ENCODE measurements at regions of chr12 and their contacts with region 1.

Region 1: DNA sequence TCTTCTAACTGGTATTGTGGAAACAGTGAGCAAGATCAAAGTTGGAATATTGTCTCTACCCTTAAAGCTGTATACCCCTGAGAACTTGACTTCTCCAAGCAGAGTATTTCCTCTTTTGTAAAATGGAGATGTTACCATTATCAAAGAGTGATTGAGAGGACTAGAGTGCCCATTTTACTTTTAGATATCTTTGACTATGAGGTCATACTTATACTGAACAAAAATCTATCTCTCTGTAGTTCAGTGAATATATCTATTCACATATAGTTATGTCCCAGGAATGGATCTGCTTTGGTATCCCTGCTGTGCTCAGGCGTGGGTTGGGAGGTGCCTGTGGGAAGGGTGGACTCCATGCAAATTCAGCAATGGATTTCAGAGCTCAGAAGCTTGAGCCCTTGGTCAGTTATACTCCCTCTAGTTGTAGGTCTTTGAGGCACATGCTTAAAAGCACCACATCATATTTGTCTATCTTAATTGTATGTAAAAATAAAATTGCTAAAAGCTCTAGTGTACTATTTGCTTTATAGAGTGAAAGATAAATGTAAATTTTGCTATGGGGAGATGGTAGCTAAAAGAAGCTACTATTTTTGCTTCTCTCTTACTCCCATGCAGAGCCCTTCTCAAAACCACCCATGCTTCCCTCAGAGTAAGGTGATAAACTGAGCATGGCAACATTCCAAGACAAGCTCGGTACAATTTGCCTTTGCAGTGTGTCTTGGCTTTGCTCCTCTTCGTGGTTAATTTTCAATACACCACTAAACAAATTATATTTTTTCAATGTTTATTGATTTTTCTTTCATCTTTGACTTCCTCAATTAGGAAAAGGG is 54.8 kb downstream of the SLC16A7 start:
- DNase-seq: no peak
- ATAC-seq: no peak
- H3K4me3 ChIP-seq: no peak overlapping the region
- H3K4me3 Mint-ChIP-seq: peak overlapping the region in 3 of 10 donors; percentile 1 to 43 (median 24)
- H3K27ac ChIP-seq: no peak overlapping the region
- H3K27ac Mint-ChIP-seq: peak overlapping the region in 2 of 9 donors; percentile 3 to 9
- H3K4me1 ChIP-seq: peaks cover 5 to 8% of the 10 kb centered on the region in 2 donors
- H3K4me1 Mint-ChIP-seq: peaks cover 9 to 65% (median 49%) of the 10 kb centered on the region in 7 donors
- H3K27me3 ChIP-seq: no peaks in the 10 kb centered on the region
- H3K27me3 Mint-ChIP-seq: no peaks in the 10 kb centered on the region

Region 2: GRCh38 chr12:57679697-57680096 is 1970.9 kb before region 1 on chr12:
- CTCF ChIA-PET with region 1: no interaction called
- POLR2A ChIA-PET with region 1: no interaction called
- intact Hi-C with region 1: no loop called
- DNase-seq: no peak
- ATAC-seq: no peak
- H3K4me3 ChIP-seq: no peak overlapping the region
- H3K4me3 Mint-ChIP-seq: no peak overlapping the region
- H3K27ac ChIP-seq: no peak overlapping the region
- H3K27ac Mint-ChIP-seq: peak overlapping the region in 1 of 9 donors; percentile 44
- H3K4me1 ChIP-seq: no peaks in the 10 kb centered on the region
- H3K4me1 Mint-ChIP-seq: no peaks in the 10 kb centered on the region
- H3K27me3 ChIP-seq: no peaks in the 10 kb centered on the region
- H3K27me3 Mint-ChIP-seq: peaks cover 0 to 38% (median 5%) of the 10 kb centered on the region in 5 donors

Region 3: DNA sequence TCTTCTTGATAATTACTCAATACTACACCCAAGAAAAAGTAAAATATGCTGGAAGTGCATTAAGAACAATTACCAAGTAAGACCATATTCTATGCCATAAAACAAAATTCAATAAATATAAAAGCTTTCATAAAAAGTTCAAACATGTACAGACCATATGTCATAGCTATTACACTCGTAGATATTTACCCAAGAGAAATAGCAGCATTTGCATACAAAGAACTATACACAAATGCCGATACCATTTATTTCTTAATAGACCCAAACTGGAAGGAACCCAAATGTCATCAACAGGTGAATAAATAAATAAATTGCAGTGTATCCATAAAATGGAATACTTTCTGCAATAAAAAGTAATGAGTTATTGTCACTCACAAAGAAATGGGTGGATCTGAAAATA is 133.1 kb before region 1 on chr12:
- CTCF ChIA-PET with region 1: no interaction called
- POLR2A ChIA-PET with region 1: no interaction called
- intact Hi-C with region 1: no loop called
- DNase-seq: no peak
- ATAC-seq: no peak
- H3K4me3 ChIP-seq: no peak overlapping the region
- H3K4me3 Mint-ChIP-seq: no peak overlapping the region
- H3K27ac ChIP-seq: no peak overlapping the region
- H3K27ac Mint-ChIP-seq: peak overlapping the region in 1 of 9 donors; percentile 19
- H3K4me1 ChIP-seq: no peaks in the 10 kb centered on the region
- H3K4me1 Mint-ChIP-seq: peaks cover 0 to 16% (median 10%) of the 10 kb centered on the region in 7 donors
- H3K27me3 ChIP-seq: no peaks in the 10 kb centered on the region
- H3K27me3 Mint-ChIP-seq: no peaks in the 10 kb centered on the region

Region 4: DNA sequence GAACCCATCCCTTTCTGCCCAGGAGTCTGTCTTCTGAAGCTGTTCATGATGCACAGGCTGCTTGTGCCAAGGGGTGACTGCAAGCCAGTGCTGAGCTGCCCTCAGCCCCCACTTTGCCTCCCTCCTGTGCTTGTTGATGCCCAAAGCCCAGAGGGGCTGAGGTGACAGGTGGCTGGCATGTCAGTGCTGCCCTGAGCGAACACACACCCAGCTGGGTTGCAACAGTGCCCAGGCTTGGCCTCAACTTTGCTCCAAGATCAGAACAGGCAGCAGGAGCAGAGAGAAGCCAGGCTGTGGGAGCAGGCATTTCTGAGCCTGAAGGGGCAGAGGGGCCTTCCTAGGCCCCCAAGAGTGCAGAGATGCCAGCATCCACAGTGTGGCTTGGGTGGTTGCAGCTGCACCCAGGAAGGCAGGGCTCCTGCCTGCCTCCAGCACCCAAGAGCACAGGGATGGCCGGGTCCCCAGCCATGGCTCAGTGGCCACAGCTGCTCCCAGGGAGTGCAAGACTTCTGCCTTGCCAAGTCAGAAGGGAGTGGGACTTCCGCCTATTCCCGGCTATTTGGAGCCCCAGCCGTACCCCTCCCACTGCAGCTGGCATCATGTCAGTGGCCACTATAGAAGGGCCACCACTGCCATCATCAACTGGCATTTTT is 28.3 kb after region 1 on chr12:
- CTCF ChIA-PET with region 1: no interaction called
- POLR2A ChIA-PET with region 1: no interaction called
- intact Hi-C with region 1: loop called in 1 of 2 experiments (anchors 1 kb)
- DNase-seq: no peak
- ATAC-seq: no peak
- H3K4me3 ChIP-seq: no peak overlapping the region
- H3K4me3 Mint-ChIP-seq: peak overlapping the region in 1 of 10 donors; percentile 18
- H3K27ac ChIP-seq: no peak overlapping the region
- H3K27ac Mint-ChIP-seq: no peak overlapping the region
- H3K4me1 ChIP-seq: no peaks in the 10 kb centered on the region
- H3K4me1 Mint-ChIP-seq: peaks cover 3 to 65% (median 50%) of the 10 kb centered on the region in 7 donors
- H3K27me3 ChIP-seq: no peaks in the 10 kb centered on the region
- H3K27me3 Mint-ChIP-seq: no peaks in the 10 kb centered on the region

Region 5: GRCh38 chr12:59689776-59690175 is 39.2 kb after region 1 on chr12:
- CTCF ChIA-PET with region 1: no interaction called
- POLR2A ChIA-PET with region 1: no interaction called
- intact Hi-C with region 1: loop called in 1 of 2 experiments (anchors 5 kb)
- DNase-seq: no peak
- ATAC-seq: no peak
- H3K4me3 ChIP-seq: no peak overlapping the region
- H3K4me3 Mint-ChIP-seq: no peak overlapping the region
- H3K27ac ChIP-seq: no peak overlapping the region
- H3K27ac Mint-ChIP-seq: no peak overlapping the region
- H3K4me1 ChIP-seq: no peaks in the 10 kb centered on the region
- H3K4me1 Mint-ChIP-seq: peaks cover 0 to 42% (median 23%) of the 10 kb centered on the region in 7 donors
- H3K27me3 ChIP-seq: no peaks in the 10 kb centered on the region
- H3K27me3 Mint-ChIP-seq: no peaks in the 10 kb centered on the region